ENCODE measurements at regions of chr6 and their contacts with region 1.

Region 1: GRCh38 chr6:134111062-134111677 is 58.7 kb upstream of the SLC2A12 start:
- DNase-seq: peak; percentile 67
- H3K4me3 Mint-ChIP-seq: no peak overlapping the region
- H3K27ac Mint-ChIP-seq: no peak overlapping the region
- H3K4me1 Mint-ChIP-seq: peaks cover 19% of the 10 kb centered on the region
- H3K27me3 Mint-ChIP-seq: no peaks in the 10 kb centered on the region
- CTCF ChIP-seq: peak; percentile 76

Region 2: DNA sequence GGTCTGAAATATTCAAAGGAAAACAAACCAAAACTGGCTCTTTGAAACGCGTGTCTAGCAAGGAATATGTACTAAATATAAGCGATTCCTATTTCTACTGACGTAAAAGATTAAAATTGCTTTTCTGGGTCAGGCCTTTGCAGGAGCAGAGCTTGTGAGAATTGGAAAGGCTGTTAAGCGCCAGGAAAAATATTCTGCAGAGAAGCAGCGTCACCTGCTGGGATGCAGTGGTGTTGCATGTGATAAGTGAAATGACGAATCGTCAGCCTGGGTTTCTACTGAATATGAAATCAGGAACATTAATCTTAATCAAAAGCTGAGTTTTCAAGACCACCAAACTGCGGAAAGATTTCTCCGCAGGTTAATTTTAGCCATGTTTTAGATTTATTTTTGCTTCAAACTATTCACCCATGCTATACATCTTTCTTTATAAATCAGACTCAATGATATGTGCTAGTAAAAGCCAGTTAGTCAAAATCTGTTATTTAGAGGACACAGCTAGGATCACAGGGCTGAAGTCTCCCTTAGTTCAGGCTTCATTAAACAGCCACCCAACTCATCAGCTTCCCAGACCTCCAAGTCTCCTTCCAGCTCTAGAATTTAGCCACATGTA is 771.4 kb after region 1 on chr6:
- CTCF ChIA-PET with region 1: interaction called, 13 read pairs
- POLR2A ChIA-PET with region 1: no interaction called
- intact Hi-C with region 1: no loop called
- DNase-seq: peak; percentile 82
- H3K4me3 Mint-ChIP-seq: no peak overlapping the region
- H3K27ac Mint-ChIP-seq: no peak overlapping the region
- H3K4me1 Mint-ChIP-seq: peaks cover 16% of the 10 kb centered on the region
- H3K27me3 Mint-ChIP-seq: no peaks in the 10 kb centered on the region
- CTCF ChIP-seq: peak; percentile 94